IMR-90 (cell line): ENCODE measurements at regions of chr6 and their contacts with region 1.

Region 1: DNA sequence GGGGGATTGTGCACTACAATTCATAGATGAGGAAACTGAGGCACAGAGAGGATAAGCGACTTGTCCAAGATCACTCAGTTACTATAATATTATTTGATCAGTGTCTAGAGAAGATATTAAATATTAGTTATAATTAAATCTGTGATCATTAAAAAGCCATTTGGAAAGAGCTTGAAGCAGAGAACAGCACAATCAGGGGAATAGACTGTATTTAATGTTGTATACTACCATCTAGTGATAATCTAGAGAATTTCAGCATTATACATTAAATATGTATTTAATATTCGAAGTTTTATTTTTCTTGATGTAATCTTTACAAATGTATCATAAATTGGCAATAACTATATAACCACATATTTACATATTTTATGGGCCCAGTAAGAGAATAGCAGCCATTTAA is 20.1 kb upstream of the MTCL3 start:
- DNase-seq: peak; percentile 47
- ATAC-seq: peak; percentile 73
- H3K4me3 ChIP-seq: no peak overlapping the region
- H3K27ac ChIP-seq: no peak overlapping the region
- H3K4me1 ChIP-seq: no peaks in the 10 kb centered on the region
- H3K27me3 ChIP-seq: peaks cover 4% of the 10 kb centered on the region; the same call in 1 of the 2 replicates
- CTCF ChIP-seq: peak; percentile 58
- POLR2A ChIP-seq: no peak
- RAD21 ChIP-seq: peak; percentile 66

Region 2: DNA sequence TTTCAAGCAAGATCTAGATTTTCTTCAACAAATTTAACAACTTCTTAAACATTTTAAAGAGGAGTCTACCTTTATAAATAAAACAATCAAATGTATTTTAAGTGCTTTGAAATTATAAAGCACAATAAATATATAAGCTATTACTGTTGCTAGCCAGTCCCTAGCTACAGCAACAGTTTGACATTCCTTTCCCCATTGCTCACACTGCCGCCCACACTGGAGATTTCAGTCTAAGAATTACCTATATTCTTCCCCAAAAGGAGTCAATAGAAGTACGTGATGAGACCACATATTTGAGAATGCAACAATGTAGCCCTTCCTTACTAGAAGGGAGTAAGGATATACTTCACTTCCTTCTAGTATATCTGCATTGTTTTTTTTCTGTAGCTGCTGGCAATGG is 338.0 kb before region 1 on chr6:
- CTCF ChIA-PET with region 1: no interaction called
- POLR2A ChIA-PET with region 1: no interaction called
- dilution Hi-C with region 1: no loop called
- in situ Hi-C with region 1: no loop called
- intact Hi-C with region 1: loop called (anchors 10 kb)
- DNase-seq: peak; percentile 78
- ATAC-seq: peak; percentile 91
- H3K4me3 ChIP-seq: no peak overlapping the region
- H3K27ac ChIP-seq: no peak overlapping the region
- H3K4me1 ChIP-seq: no peaks in the 10 kb centered on the region
- H3K27me3 ChIP-seq: no peaks in the 10 kb centered on the region
- CTCF ChIP-seq: no peak
- POLR2A ChIP-seq: no peak
- RAD21 ChIP-seq: no peak

Region 3: DNA sequence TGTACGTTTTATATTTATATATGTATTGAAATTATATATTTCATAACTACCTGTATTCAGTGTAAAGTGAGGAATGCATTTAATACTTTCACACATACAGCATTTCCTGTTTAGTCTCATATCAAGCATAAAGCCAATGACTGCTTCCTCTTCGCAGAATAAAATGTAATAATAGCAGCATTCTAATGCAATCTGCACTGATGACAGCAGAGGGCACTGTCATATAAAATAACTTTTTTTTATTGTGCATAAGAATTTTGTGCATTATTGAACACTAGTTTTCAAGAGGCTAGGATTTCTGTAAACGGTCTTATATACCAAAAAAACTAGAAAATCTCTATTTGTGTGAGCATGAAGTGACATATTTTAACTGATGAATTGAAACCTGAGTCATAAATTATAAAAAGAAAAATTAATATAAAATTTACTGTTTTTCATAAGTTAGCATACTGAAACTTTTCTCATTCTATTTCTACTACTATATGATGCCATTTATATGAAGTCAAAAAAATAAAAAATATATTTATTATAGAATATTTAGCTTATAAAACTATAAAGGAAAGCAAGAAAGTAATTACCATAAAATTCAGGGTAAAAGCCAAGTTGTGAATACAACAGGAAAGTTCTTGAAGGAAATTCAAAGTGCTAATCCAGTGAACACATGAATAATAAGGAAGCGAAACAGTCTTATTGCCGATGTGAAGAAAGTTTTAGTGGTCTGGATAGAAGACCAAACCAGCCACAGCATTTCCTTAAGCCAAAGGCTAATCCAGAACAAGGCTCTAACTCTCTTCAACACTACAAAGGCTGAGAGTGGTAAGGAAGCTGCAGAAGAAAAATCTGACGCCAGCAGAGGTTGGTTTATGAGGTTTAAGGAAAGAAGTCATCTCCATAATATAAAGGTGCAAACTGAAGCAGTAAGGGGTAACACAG is 236.3 kb before region 1 on chr6:
- CTCF ChIA-PET with region 1: interaction called, 3 read pairs
- POLR2A ChIA-PET with region 1: no interaction called
- dilution Hi-C with region 1: no loop called
- in situ Hi-C with region 1: loop called (anchors 5 kb)
- intact Hi-C with region 1: loop called (anchors 1 kb)
- DNase-seq: peak; percentile 48
- ATAC-seq: peak; percentile 34; the same call in 1 of the 2 replicates
- H3K4me3 ChIP-seq: no peak overlapping the region
- H3K27ac ChIP-seq: no peak overlapping the region
- H3K4me1 ChIP-seq: no peaks in the 10 kb centered on the region; the same call in none of the 2 replicates
- H3K27me3 ChIP-seq: no peaks in the 10 kb centered on the region
- CTCF ChIP-seq: peak; percentile 81
- POLR2A ChIP-seq: no peak
- RAD21 ChIP-seq: peak; percentile 69

Region 4: GRCh38 chr6:127464881-127465459 is 74.3 kb before region 1 on chr6:
- CTCF ChIA-PET with region 1: interaction called, 9 read pairs
- POLR2A ChIA-PET with region 1: no interaction called
- dilution Hi-C with region 1: no loop called
- in situ Hi-C with region 1: loop called (anchors 5 kb)
- intact Hi-C with region 1: loop called (anchors 1 kb)
- DNase-seq: peak; percentile 78
- ATAC-seq: peak; percentile 88
- H3K4me3 ChIP-seq: no peak overlapping the region
- H3K27ac ChIP-seq: no peak overlapping the region
- H3K4me1 ChIP-seq: peaks cover 4% of the 10 kb centered on the region; the same call in 1 of the 2 replicates
- H3K27me3 ChIP-seq: no peaks in the 10 kb centered on the region
- CTCF ChIP-seq: peak; percentile 88
- POLR2A ChIP-seq: no peak
- RAD21 ChIP-seq: peak; percentile 79